Activated CD4-positive, alpha-beta T cell treated with anti-CD3 and anti-CD28 coated beads, Interleukin-2, amount 10 ng/mL, durations not matched to agents 7 days and 5 days (primary cell): ENCODE measurements at regions of chr3 and their contacts with region 1.

Region 1: DNA sequence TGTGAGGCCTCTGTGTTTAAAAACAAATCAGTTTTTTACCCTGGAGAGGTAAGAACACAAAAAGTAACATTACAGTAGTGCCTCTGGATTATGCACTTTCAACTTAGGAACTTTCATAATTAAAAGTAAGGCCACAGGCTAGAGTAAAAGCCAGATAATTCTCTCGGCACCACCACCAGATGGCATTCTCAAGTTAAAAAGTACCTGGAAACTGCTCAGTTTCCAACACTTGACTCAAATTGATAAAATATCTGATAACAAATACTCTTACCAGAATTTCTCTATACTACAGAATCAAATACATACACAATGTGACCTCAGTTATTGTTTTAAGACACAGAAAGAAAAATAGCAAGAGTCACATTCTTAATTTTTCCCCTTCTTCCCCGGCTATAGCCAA is 19.9 kb downstream of the SPICE1 start:
- DNase-seq: peak; percentile 60
- H3K4me3 Mint-ChIP-seq: no peak overlapping the region
- H3K27ac Mint-ChIP-seq: no peak overlapping the region
- H3K4me1 Mint-ChIP-seq: peaks cover 8% of the 10 kb centered on the region
- H3K27me3 Mint-ChIP-seq: no peaks in the 10 kb centered on the region

Region 2: GRCh38 chr3:113575206-113575605 is 80.2 kb after region 1 on chr3:
- CTCF ChIA-PET with region 1: interaction called, 16 read pairs
- POLR2A ChIA-PET with region 1: interaction called, 3 read pairs
- DNase-seq: no peak
- H3K4me3 Mint-ChIP-seq: no peak overlapping the region
- H3K27ac Mint-ChIP-seq: peak overlapping the region; percentile 26
- H3K4me1 Mint-ChIP-seq: peaks cover 8% of the 10 kb centered on the region
- H3K27me3 Mint-ChIP-seq: no peaks in the 10 kb centered on the region

Region 3: GRCh38 chr3:113745273-113746068 is 250.4 kb after region 1 on chr3:
- CTCF ChIA-PET with region 1: interaction called, 10 read pairs
- POLR2A ChIA-PET with region 1: no interaction called
- DNase-seq: peak; percentile 88
- H3K4me3 Mint-ChIP-seq: peak overlapping the region; percentile 93
- H3K27ac Mint-ChIP-seq: peak overlapping the region; percentile 100
- H3K4me1 Mint-ChIP-seq: peaks cover 59% of the 10 kb centered on the region
- H3K27me3 Mint-ChIP-seq: no peaks in the 10 kb centered on the region